ENCODE measurements at regions of chr6 and their contacts with region 1.

Region 1: GRCh38 chr6:32774426-32774825 is 11.1 kb upstream of the HLA-DQB2 start:
- DNase-seq: no peak
- H3K4me3 ChIP-seq: no peak overlapping the region
- H3K27ac ChIP-seq: no peak overlapping the region
- H3K4me1 ChIP-seq: no peaks in the 10 kb centered on the region
- H3K27me3 ChIP-seq: no peaks in the 10 kb centered on the region
- CTCF ChIP-seq: no peak
- POLR2A ChIP-seq: no peak

Region 2: DNA sequence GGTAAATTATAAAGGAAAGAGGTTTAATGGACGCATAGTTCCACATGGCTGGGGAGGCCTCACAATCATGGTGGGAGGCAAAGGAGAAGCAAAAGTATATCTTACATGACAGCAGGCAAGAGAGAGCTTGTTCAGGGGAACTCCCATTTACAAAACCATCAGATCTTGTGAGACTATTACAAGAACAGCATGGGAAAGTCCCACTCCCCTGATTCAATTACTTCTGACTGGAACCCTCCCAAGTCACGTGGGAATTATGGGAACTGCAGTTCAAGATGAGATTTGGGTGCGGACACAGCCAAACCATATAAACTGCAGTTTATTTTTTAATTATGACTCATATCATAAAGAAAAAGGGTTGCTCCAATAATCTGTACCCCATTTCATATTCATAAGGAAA is 55.5 kb before region 1 on chr6:
- intact Hi-C with region 1: loop called in 1 of 2 experiments (anchors 10 kb)
- DNase-seq: no peak
- H3K4me3 ChIP-seq: no peak overlapping the region
- H3K27ac ChIP-seq: no peak overlapping the region
- H3K4me1 ChIP-seq: no peaks in the 10 kb centered on the region
- H3K27me3 ChIP-seq: no peaks in the 10 kb centered on the region
- CTCF ChIP-seq: no peak
- POLR2A ChIP-seq: no peak

Measured in adrenal gland (tissue), 19 donors.